A673 (cell line): ENCODE measurements at regions of chrX and their contacts with region 1.

Region 1: DNA sequence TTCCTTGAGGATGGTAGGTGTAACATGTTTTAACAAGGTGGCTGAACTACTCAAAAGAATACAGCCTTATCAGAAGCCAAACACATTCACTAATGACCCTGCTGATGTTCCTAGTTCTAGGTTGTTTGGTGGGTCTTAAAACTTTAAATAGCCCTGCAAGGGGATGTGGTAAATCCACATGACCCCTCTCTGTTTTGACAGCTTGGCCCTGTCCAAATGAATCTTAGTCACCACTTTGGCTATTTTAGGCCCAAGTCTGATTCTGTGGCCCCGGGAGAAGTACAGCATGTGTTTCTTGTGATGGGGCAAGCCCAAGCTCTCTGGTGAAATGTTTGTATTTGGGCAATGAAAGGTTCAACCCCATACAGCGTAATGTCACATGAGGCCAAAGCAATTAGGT is 54.5 kb upstream of the GPR34 start:
- DNase-seq: no peak
- H3K4me3 ChIP-seq: no peak overlapping the region
- H3K27ac ChIP-seq: no peak overlapping the region
- H3K4me1 ChIP-seq: no peaks in the 10 kb centered on the region
- H3K27me3 ChIP-seq: no peaks in the 10 kb centered on the region
- CTCF ChIP-seq: no peak

Region 2: DNA sequence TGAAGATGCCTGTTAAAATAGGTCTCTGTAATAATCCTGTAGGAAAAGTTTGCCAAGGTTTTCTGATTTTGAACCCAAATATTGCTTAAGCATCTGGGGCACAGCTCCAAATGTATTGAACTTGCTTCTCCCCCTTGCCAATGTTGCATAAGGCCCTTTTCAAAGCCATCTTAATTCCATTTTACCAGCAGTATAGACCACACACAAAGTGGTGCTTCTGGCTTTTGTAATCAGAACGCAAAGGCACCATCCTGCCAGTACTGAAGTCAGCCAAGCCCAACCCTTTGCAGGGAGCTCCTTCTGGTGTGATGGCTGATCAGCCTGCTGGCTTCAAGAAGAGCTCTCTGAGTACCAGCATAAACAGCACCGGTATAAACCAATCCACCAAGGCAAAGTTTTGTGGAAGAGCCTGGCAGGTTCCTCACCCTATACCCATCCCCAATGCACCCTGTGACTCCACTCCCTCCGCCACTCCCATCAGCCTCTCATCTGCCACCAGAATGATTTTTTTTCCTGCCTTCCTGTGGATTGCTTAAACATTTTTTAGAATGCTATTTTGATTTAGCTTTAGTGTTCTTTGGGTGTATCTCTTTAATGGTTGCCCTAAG is 588.2 kb before region 1 on chrX:
- CTCF ChIA-PET with region 1: no interaction called
- POLR2A ChIA-PET with region 1: interaction called, 19 read pairs
- intact Hi-C with region 1: no loop called
- DNase-seq: peak; percentile 32
- H3K4me3 ChIP-seq: no peak overlapping the region
- H3K27ac ChIP-seq: no peak overlapping the region
- H3K4me1 ChIP-seq: peaks cover 2% of the 10 kb centered on the region
- H3K27me3 ChIP-seq: no peaks in the 10 kb centered on the region
- CTCF ChIP-seq: no peak